ENCODE measurements at regions of chrX and their contacts with region 1.

Region 1: DNA sequence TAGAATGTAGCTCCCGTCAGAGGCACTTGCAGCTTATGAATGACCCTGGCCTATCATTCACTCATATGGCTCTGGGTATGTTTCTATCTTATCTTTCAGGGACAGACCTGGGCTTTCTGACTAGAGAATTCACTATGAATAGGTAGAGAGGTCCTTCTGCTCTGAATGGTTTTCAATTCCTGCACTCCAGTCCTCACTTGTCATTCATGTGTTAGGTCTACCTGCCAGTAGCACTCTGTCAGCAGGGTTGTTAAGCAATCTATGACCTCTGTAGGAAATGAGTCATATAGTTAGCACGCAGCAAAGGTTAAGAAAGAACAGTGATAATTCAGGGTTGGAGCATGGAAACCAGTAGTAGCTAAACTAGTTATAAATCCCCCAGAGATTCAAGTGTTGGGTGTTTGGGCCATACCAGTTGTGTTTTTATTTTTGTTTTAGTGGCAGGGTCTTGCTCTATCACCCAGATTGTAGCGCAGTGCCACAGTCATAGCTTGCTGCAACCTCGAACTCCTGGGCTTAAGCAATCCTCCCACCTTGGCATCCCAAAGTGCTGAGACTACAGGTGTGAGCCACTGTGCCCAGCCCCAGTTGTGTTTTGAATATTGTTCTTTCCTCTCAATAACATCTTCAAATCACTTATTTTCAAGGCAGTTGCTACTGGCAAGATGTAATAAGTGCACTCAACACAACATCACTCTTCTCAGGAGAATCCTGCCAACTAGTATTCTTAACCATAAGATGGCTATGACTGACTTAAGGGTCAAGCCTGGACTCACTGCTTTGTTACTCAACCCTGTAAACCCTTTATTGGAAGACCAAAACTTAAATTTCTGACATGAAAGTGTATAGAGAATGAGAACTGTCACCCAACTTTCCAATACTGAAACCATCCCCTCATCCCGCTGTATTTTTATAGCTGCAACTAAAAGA is 25.1 kb downstream of the ARL13A start:
- DNase-seq: peak; percentile 24
- H3K4me3 Mint-ChIP-seq: no peak overlapping the region
- H3K27ac Mint-ChIP-seq: peak overlapping the region; percentile 68
- H3K4me1 Mint-ChIP-seq: peaks cover 17% of the 10 kb centered on the region
- H3K27me3 Mint-ChIP-seq: no peaks in the 10 kb centered on the region

Region 2: DNA sequence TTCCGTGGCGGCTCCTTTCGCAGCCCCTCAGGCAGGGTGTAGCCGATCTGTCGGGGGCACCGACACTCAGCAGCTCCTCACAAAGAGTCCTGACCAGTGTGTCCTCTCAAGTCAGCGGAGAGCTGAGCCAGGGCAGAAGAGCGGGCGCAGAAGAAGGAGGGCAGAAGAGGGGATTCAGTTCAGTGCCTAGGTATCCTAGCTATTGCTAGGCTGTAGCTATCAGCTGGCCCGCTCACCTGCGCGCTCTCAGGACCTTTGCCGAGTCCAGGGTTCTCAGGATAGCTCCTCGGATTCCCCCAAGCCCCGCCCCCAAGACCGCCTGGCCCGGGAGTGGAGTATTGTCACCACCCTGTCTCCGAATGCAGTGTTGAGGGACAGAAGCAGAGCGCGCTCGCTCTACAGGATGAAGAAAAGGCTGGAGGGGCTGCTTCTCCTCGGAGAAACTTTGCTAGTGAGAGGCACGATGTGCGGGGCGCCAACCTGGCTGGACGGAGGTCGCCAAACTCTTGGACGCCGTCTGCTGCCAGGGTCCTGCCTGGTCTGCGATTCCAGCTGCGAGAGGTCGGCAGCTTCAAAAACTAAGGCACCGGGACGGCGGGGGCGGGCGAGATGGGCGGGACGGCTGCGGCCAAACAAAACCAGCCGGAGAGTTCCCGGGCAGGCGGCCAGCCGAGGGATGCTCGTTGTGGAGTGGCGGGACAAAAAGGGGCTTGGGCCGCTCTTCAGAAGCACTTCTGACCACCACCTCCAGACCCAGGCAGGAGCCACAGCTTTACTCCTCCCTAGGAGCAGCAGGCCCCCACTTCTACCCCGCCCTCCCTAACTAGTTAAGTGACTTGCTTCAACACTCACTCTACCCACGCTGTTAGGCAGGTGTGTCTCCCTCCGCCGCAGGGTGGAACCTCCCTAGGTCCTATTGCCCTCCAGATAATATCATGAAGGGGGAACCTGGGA is 65.7 kb before region 1 on chrX and contains the start of gene XKRX:
- CTCF ChIA-PET with region 1: interaction called, 3 read pairs
- intact Hi-C with region 1: loop called (anchors 5 kb)
- DNase-seq: peak; percentile 74
- H3K4me3 Mint-ChIP-seq: peak within 1 kb of the TSS; percentile 82
- H3K27ac Mint-ChIP-seq: no peak within 1 kb of the TSS
- H3K4me1 Mint-ChIP-seq: peaks cover 52% of the 10 kb centered on the region
- H3K27me3 Mint-ChIP-seq: no peaks in the 10 kb centered on the region
- total RNA-seq, gene XKRX: 0.64 to 0.72 TPM

Measured in activated naive CD4-positive, alpha-beta T cell treated with anti-CD3 and anti-CD28 coated beads for 36 hours (primary cell).